Esophagus muscularis mucosa (tissue), 4 donors: ENCODE measurements at regions of chr6 and their contacts with region 1.

Region 1: GRCh38 chr6:52503848-52504781 is 72.7 kb downstream of the TRAM2 start:
- DNase-seq: no peak
- H3K4me3 ChIP-seq: no peak overlapping the region
- H3K27ac ChIP-seq: peak overlapping the region; percentile 61 to 80 (median 68)
- H3K4me1 ChIP-seq: peaks cover 52 to 65% (median 58%) of the 10 kb centered on the region in 4 donors
- H3K27me3 ChIP-seq: no peaks in the 10 kb centered on the region
- CTCF ChIP-seq: no peak
- EP300 ChIP-seq: no peak
- POLR2A ChIP-seq: no peak

Region 2: DNA sequence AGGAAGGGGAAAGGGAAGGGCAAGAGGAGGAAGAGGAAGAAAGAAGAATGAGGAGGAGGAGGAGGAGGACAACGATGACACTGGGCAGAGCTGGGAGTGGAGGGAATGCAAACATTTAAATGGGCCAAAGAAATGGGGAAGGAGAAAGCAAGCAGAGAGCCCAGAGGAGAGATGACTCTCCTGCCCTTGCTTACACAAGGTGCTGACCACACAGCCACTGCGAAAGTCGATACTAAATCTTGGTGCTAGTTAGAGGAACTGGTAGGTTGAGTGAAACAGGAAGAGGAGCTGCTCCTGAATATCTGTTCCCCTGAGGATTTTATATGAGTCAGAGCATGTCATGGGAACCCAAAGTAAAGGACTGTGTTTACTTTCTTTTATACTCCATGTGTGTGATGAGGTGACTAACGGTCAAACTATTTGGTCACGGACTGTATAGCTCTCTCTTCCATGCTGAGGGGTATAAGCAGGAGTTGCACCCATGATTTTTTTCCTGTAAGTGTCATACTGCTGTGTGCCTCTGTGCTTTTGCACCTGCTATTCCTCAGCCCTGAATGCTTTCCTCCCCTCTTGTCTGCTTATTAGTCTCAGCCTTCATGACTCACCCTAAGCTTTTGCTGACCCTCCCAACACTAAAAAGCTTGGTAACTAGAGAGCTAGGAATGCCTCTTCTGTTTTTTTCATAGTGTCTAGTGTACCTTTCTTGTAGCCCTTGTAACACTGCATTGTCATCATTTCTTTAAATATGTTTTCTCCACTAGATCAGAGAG is 151.7 kb before region 1 on chr6:
- intact Hi-C with region 1: no loop called
- DNase-seq: no peak
- H3K4me3 ChIP-seq: no peak overlapping the region
- H3K27ac ChIP-seq: peak overlapping the region in 1 of 4 donors; percentile 40
- H3K4me1 ChIP-seq: peaks cover 0 to 12% (median 4%) of the 10 kb centered on the region in 4 donors
- H3K27me3 ChIP-seq: no peaks in the 10 kb centered on the region
- CTCF ChIP-seq: no peak
- EP300 ChIP-seq: no peak
- POLR2A ChIP-seq: no peak

Region 3: GRCh38 chr6:52371656-52372191 is 132.4 kb before region 1 on chr6:
- intact Hi-C with region 1: no loop called
- DNase-seq: no peak
- H3K4me3 ChIP-seq: no peak overlapping the region
- H3K27ac ChIP-seq: no peak overlapping the region
- H3K4me1 ChIP-seq: peaks cover 3 to 22% (median 8%) of the 10 kb centered on the region in 4 donors
- H3K27me3 ChIP-seq: no peaks in the 10 kb centered on the region
- CTCF ChIP-seq: no peak
- EP300 ChIP-seq: no peak
- POLR2A ChIP-seq: no peak

Region 4: GRCh38 chr6:52588087-52588709 is 84.1 kb after region 1 on chr6:
- intact Hi-C with region 1: no loop called
- DNase-seq: no peak
- H3K4me3 ChIP-seq: no peak overlapping the region
- H3K27ac ChIP-seq: no peak overlapping the region
- H3K4me1 ChIP-seq: peaks cover 5 to 21% (median 14%) of the 10 kb centered on the region in 4 donors
- H3K27me3 ChIP-seq: no peaks in the 10 kb centered on the region
- CTCF ChIP-seq: no peak
- EP300 ChIP-seq: no peak
- POLR2A ChIP-seq: no peak

Region 5: DNA sequence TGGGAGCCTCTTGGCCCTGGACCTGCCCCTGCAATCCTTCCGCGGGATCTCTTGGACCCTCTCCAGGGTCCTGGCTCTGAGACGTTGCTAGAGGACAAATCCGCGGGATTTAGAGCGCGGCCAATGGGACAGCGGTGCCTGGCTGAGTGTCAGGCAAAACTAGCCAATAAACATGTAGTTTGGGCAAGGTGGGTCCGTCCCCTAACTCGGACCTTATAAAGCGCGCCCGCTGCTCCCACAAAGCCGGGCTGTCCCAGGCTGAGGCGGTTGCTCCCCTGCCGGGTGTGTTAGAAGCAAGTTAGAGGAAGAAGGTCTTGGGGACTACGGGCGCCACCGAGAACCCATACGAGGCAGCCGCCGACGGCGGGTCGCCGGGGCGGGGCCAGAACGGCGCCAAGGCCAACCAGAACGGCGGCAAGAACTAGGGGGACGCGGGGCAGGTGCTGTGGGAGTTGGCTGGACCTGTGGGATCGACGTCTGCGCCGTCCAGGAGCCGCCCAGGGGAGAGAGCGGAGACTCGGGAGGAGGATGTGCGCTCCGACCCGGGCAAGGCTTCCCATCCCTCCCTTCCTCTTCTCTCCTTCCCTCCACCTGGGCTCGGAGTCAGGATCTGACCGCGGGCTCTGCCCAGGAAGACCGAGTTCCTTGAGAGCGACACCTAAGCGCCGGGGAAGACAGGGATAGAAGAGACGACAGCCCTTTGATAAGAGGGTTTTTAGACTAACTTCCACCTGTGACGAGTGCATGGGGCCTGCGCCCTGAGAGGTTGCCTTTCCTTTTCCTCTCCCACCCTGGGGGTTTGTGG is 160.3 kb after region 1 on chr6:
- intact Hi-C with region 1: loop called (anchors 10 kb)
- DNase-seq: peak; percentile 96
- H3K4me3 ChIP-seq: peak overlapping the region; percentile 57 to 86 (median 76)
- H3K27ac ChIP-seq: peak overlapping the region; percentile 63 to 86 (median 80)
- H3K4me1 ChIP-seq: peaks cover 16 to 20% (median 16%) of the 10 kb centered on the region in 4 donors
- H3K27me3 ChIP-seq: no peaks in the 10 kb centered on the region
- CTCF ChIP-seq: no peak
- EP300 ChIP-seq: no peak
- POLR2A ChIP-seq: peak; percentile 27